CD14-positive monocyte (primary cell): ENCODE measurements at regions of chr12 and their contacts with region 1.

Region 1: DNA sequence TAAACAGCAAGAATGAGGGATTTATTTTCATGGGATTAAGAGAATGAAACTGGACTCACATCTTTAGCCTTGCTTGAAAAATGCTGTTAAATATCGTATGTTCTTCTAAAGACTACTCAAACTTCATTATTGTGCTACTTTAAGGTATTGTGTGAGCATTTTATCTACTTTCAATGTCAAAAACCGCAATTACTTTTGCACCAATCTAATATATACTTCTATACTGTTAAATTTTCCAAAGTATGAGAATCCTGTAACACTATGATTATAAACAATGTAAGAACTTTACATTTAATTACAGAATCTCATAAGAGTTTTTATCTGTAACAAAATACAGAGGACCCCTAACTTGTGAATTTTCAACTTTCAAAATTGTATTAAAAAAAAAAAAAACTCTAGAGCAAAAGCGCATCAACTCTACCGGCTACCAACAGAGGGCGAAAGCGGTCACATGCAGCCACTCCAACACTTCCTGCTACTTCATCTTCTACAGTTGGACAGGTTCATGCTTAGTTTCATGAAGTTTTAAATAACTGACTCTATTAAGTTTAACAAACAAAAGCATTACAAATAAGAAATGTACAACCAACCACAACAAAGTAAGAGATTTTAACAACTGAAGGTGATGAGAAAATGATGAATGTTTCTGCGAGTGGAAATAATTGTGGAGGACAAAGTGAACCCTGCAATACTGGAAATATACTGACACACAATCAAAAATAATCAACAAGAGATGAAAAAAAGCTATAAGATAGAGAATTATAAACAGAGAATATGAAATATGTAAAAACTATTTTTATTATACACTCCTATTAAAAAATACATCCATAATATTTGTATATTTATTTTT is 210.9 kb downstream of the MED13L start:
- DNase-seq: peak; percentile 40 to 61 (median 58)
- H3K4me3 ChIP-seq: no peak overlapping the region
- H3K4me3 Mint-ChIP-seq: no peak overlapping the region
- H3K27ac ChIP-seq: peak overlapping the region in 1 of 2 donors; percentile 12
- H3K27ac Mint-ChIP-seq: peak overlapping the region in 2 of 7 donors; percentile 8 to 58
- H3K4me1 ChIP-seq: peaks cover 5 to 18% of the 10 kb centered on the region in 2 donors
- H3K4me1 Mint-ChIP-seq: peaks cover 28% of the 10 kb centered on the region
- H3K27me3 ChIP-seq: no peaks in the 10 kb centered on the region
- H3K27me3 Mint-ChIP-seq: peaks cover 0 to 2% (median 0%) of the 10 kb centered on the region in 3 donors
- CTCF ChIP-seq: peak; percentile 92

Region 2: DNA sequence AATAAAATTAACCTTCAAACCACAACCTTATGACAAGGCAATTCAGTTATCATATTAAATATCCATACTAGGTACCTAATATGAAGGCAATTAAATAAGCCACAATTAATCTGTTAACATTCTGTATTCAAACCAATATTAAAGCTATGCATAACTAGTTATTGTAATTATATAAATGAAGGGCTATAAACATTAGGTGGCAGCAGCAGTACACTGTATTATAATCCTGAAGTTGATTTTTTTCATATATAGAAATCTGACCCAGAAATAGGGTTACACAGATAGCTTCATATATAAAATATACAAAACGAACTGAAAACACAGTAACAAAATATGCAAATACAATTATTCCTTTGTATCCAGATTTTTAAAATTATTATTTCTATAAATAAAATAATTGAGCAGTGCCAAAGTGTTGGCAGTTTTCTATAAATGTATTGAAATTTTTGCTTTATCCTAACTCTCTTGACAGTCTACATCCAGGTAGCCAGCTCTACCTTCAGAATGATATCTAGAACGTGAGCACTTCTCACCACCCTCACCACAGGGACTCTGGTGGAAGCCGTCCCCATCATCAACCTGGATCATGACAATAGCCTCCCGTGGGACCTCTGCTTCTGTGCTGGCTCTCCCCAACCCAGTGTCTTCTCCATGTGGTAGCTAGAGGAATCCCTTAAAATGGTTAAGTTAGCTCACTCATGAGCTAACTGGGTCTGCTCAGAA is 74.7 kb after region 1 on chr12:
- intact Hi-C with region 1: no loop called
- DNase-seq: no peak
- H3K4me3 ChIP-seq: no peak overlapping the region
- H3K4me3 Mint-ChIP-seq: no peak overlapping the region
- H3K27ac ChIP-seq: peak overlapping the region in 1 of 2 donors; percentile 39
- H3K27ac Mint-ChIP-seq: peak overlapping the region in 6 of 7 donors; percentile 7 to 70 (median 31)
- H3K4me1 ChIP-seq: peaks cover 26 to 50% of the 10 kb centered on the region in 2 donors
- H3K4me1 Mint-ChIP-seq: peaks cover 58% of the 10 kb centered on the region
- H3K27me3 ChIP-seq: no peaks in the 10 kb centered on the region
- H3K27me3 Mint-ChIP-seq: no peaks in the 10 kb centered on the region
- CTCF ChIP-seq: no peak

Region 3: DNA sequence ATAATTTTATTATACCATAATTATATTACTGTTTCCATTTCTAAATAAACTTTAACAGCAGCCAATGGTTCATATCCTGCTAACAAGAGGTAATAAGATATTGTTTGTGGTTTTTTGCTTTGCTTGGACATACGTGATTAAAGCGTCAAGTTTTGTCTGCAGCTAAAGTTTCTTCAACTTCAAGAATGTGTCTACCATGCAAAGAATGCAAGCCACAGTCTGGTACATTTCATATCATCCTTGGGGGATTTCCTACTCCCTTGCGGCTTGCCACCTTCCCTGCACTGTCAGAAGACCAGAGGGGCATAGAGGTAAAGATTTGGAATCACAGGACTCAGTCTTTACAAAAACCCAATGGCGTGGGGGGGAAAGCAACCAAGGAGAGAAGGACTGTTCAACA is 85.7 kb after region 1 on chr12:
- intact Hi-C with region 1: no loop called
- DNase-seq: no peak
- H3K4me3 ChIP-seq: no peak overlapping the region
- H3K4me3 Mint-ChIP-seq: no peak overlapping the region
- H3K27ac ChIP-seq: no peak overlapping the region
- H3K27ac Mint-ChIP-seq: no peak overlapping the region
- H3K4me1 ChIP-seq: no peaks in the 10 kb centered on the region
- H3K4me1 Mint-ChIP-seq: peaks cover 21% of the 10 kb centered on the region
- H3K27me3 ChIP-seq: no peaks in the 10 kb centered on the region
- H3K27me3 Mint-ChIP-seq: no peaks in the 10 kb centered on the region
- CTCF ChIP-seq: no peak

Region 4: DNA sequence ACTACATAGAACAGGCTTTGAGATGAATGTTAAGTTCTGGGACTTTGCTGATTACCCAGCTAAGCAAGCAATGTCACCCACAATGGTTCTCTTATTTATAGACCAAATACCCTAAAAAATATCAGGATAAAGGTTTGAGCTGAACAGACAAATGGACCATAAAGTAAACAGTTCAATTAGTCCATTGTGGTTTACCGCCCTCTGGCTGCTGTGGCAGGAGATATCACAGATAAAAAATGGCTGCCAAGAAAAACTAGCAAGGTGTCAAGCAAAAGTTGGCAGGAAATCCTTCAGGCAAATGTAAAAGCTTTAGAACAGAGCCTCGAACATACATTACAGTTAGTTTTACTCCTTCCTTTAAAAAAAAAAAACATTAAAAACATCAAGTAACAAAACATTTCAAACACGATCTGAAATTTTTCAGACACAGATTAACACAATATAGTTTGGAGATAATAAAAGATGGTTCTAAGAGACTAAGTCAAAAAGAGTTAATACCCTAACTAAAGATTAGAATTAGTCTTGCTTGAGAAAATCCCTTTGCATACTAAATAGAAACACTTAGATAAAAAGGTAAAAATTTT is 169.6 kb after region 1 on chr12:
- intact Hi-C with region 1: loop called in 1 of 2 experiments (anchors 10 kb)
- DNase-seq: peak in 2 of 3 donors; percentile 29 to 38
- H3K4me3 ChIP-seq: no peak overlapping the region
- H3K4me3 Mint-ChIP-seq: no peak overlapping the region
- H3K27ac ChIP-seq: peak overlapping the region in 1 of 2 donors; percentile 39
- H3K27ac Mint-ChIP-seq: peak overlapping the region in 2 of 7 donors; percentile 14 to 78
- H3K4me1 ChIP-seq: peaks cover 0 to 8% of the 10 kb centered on the region in 2 donors
- H3K4me1 Mint-ChIP-seq: peaks cover 27% of the 10 kb centered on the region
- H3K27me3 ChIP-seq: no peaks in the 10 kb centered on the region
- H3K27me3 Mint-ChIP-seq: no peaks in the 10 kb centered on the region
- CTCF ChIP-seq: peak; percentile 73